ENCODE measurements at regions of chr20 and their contacts with region 1.

Region 1: DNA sequence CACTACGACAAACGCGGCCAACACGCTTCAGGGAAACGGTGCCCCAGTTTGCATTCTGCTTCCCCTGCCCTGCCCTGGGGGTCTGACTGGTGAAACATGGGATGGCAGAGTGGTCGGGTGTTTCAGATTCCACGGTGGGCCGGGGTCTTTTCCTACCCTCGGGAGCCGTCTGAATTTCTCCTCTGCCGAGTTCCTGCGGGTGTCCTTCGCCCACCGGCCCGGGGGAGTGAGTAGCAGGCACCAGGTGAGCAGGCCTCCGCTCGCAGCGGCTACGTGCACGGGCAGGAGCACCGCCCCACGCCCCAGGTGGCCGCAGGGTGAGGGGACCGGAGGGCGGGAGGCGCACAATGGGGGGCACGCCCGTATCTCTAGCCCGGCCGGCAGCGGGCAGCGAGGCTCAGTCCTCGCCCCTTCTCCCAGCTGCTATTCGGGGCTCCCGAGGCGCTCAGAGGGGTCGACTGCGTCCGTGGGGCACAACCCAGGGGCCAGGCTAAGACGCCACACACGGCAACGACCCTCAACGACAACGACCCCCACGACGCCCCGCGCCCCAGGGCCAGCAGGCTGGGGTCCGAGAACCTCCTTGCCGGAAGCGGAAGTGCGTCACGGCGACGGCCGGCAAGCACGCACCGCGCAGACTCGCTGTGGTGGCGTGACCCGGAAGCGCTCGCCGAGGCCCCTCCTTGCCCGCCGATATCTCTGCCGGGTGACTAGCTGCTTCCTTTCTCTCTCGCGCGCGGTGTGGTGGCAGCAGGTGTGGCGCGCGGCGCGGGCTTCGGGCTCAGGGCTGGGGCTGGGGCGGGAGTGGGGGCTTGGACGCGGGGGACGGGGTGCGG is at the start of gene RPS21:
- DNase-seq: peak; percentile 89
- ATAC-seq: peak; percentile 79
- H3K4me3 ChIP-seq: peak within 1 kb of the TSS; percentile 92
- H3K27ac ChIP-seq: peak within 1 kb of the TSS; percentile 96
- H3K4me1 ChIP-seq: peaks cover 5% of the 10 kb centered on the region
- H3K27me3 ChIP-seq: no peaks in the 10 kb centered on the region
- CTCF ChIP-seq: no peak
- POLR2A ChIP-seq: peak; percentile 84
- RAD21 ChIP-seq: no peak
- total RNA-seq, gene RPS21: 2,710 and 3,846 TPM in 2 replicates

Region 2: DNA sequence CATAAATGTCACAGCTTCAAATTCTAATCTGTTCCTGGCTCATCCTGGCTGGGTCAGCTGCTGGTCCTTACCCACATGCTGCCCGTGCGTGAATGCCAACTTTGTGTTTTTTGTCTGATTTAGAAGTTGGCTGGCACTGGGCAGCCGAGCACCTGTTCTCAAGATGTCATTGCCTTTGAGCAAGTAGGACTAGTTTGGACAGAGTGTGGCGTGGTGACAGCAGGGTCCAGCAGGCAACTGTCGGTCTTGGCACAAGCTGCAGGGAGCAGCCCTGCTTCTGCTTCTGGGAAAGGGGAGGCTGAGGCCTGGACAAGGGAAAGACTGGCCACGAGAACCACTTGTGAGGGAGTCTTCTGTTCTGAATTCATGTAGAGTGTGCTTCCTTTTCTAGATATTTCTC is 110.2 kb before region 1 on chr20:
- CTCF ChIA-PET with region 1: no interaction called
- POLR2A ChIA-PET with region 1: no interaction called
- dilution Hi-C with region 1: loop called (anchors 25 kb)
- in situ Hi-C with region 1: no loop called
- intact Hi-C with region 1: no loop called
- DNase-seq: no peak
- ATAC-seq: no peak
- H3K4me3 ChIP-seq: no peak overlapping the region
- H3K27ac ChIP-seq: no peak overlapping the region
- H3K4me1 ChIP-seq: no peaks in the 10 kb centered on the region
- H3K27me3 ChIP-seq: no peaks in the 10 kb centered on the region
- CTCF ChIP-seq: no peak
- POLR2A ChIP-seq: no peak
- RAD21 ChIP-seq: no peak

Region 3: GRCh38 chr20:62492711-62493110 is 106.1 kb after region 1 on chr20:
- CTCF ChIA-PET with region 1: no interaction called
- POLR2A ChIA-PET with region 1: interaction called, 11 read pairs
- dilution Hi-C with region 1: no loop called
- in situ Hi-C with region 1: no loop called
- intact Hi-C with region 1: no loop called
- DNase-seq: no peak
- ATAC-seq: no peak
- H3K4me3 ChIP-seq: no peak overlapping the region
- H3K27ac ChIP-seq: no peak overlapping the region
- H3K4me1 ChIP-seq: no peaks in the 10 kb centered on the region
- H3K27me3 ChIP-seq: peaks cover 51% of the 10 kb centered on the region
- CTCF ChIP-seq: no peak
- POLR2A ChIP-seq: no peak
- RAD21 ChIP-seq: no peak

Measured in IMR-90 (cell line).